Calu3 (cell line): ENCODE measurements at regions of chr3 and their contacts with region 1.

Region 1: DNA sequence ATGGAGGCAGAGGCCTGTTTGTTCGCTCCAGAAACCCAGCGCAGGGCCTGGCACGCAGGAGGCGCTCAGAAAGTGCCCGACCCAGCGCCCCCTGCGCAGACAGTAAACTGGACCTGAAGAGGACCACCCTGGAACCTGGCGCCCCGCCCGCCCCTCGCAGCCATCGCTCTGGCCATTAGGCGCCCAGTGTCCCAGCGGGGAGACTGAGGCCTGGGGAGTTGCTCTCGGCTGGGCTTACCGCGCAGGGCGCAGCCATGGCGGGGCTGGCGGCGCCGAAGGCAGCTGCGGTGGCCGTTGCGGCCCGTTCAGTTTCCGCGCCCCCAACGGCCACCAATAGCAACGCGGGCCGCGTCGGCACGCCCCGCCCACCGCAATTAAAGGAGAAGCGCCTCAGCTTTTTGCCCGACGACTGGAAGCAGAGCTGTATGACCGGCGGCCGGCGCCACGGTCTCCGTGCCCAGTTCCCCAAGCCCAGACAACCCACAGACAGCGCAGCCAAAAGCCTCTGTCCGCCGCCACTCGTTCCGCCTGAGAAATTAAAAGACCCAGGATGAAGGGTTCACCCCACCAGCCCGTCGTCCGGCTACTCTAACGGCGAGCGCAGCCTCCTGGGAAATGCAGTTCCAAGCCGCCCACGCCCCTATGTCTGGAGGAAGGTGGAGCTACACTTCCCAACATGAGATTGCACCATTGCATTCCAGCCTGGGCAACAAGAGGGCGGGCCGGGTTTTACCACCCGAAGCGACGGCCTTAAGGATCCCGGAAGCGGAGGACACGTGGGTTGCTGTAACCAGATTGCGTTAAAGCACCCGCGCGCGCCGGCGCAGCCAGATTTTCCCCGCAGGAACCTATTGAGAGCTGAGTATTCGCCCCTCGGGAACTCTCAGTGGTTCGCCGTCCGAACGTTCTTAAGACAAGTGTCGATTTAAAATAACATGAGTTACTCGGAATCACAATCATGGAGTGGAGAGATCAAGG is at the start of gene POC1A:
- DNase-seq: peak; percentile 92
- H3K4me3 Mint-ChIP-seq: peak within 1 kb of the TSS; percentile 93
- H3K27ac Mint-ChIP-seq: peak within 1 kb of the TSS; percentile 96
- H3K4me1 Mint-ChIP-seq: peaks cover 8% of the 10 kb centered on the region
- H3K27me3 Mint-ChIP-seq: no peaks in the 10 kb centered on the region
- CTCF ChIP-seq: no peak
- total RNA-seq, gene POC1A: 26.4 and 26.9 TPM in 2 replicates

Region 2: DNA sequence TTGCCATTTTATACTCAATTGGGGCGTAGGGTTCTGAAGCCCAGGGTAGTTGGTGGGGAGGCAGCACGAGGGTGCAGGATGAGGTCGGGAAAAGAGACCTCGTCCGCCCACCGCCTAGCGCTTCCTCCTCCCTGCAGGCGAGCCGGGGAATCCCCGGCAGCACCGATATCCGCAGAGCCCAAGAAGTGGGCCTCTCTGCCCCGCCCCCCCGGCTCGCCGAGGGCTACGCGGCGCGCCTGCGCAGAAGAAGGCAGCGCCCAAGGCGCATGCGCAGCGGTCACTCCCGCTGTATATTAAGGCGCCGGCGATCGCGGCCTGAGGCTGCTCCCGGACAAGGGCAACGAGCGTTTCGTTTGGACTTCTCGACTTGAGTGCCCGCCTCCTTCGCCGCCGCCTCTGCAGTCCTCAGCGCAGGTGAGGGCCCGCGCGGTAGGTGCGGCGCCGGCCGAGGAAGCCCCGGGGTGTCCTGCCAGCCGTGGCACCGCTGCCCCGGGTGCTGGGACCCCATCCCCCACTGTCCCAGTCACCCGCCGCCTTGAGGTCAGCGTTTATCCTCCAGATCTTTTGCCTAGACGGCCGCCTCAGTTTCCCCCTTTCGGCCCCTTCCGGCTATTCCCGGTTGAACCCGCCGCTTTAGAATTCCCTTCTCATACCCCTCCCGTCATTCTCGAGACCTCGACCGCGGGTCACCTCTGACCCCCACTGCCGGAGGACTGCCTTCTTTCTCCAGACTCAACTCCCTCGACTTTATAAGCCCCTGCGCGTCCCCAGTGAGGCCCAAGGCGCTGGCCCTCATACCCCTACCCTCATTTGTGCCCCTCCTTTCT is 43.6 kb after region 1 on chr3 and contains the start of gene ALAS1:
- CTCF ChIA-PET with region 1: interaction called, 8 read pairs
- intact Hi-C with region 1: loop called (anchors 5 kb)
- DNase-seq: peak; percentile 95
- H3K4me3 Mint-ChIP-seq: peak within 1 kb of the TSS; percentile 96
- H3K27ac Mint-ChIP-seq: peak within 1 kb of the TSS; percentile 97
- H3K4me1 Mint-ChIP-seq: peaks cover 33% of the 10 kb centered on the region
- H3K27me3 Mint-ChIP-seq: no peaks in the 10 kb centered on the region
- CTCF ChIP-seq: no peak
- total RNA-seq, gene ALAS1: 80.2 and 81.7 TPM in 2 replicates

Region 3: GRCh38 chr3:52220380-52221026 is 66.1 kb after region 1 on chr3:
- CTCF ChIA-PET with region 1: interaction called, 13 read pairs
- intact Hi-C with region 1: loop called (anchors 5 kb)
- DNase-seq: peak; percentile 88
- H3K4me3 Mint-ChIP-seq: no peak overlapping the region
- H3K27ac Mint-ChIP-seq: no peak overlapping the region
- H3K4me1 Mint-ChIP-seq: peaks cover 27% of the 10 kb centered on the region
- H3K27me3 Mint-ChIP-seq: no peaks in the 10 kb centered on the region
- CTCF ChIP-seq: peak; percentile 86

Region 4: GRCh38 chr3:52471371-52472238 is 317.2 kb after region 1 on chr3:
- CTCF ChIA-PET with region 1: no interaction called
- intact Hi-C with region 1: no loop called
- DNase-seq: peak; percentile 70
- H3K4me3 Mint-ChIP-seq: no peak overlapping the region
- H3K27ac Mint-ChIP-seq: no peak overlapping the region
- H3K4me1 Mint-ChIP-seq: no peaks in the 10 kb centered on the region
- H3K27me3 Mint-ChIP-seq: no peaks in the 10 kb centered on the region
- CTCF ChIP-seq: peak; percentile 60

Region 5: DNA sequence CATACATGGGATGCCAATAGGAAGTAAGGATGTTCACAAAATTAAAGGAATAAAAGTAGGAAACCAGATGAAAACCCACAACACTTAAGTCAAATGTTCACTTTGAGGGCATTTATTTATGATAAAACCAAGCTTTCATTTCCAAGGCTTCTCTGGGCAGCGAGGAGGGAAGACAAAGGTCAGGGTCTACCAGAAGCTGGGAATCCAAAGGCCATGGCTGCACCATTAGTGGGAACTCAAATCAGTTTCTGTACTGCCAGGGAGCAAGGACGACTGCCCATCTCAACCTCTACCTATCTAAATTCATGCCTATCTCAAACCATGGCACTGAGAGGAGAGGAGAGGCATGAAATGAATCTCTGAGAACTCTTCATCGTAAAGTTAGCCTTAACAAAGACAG is 508.7 kb after region 1 on chr3:
- CTCF ChIA-PET with region 1: no interaction called
- intact Hi-C with region 1: no loop called
- DNase-seq: no peak
- H3K4me3 Mint-ChIP-seq: no peak overlapping the region
- H3K27ac Mint-ChIP-seq: no peak overlapping the region
- H3K4me1 Mint-ChIP-seq: no peaks in the 10 kb centered on the region
- H3K27me3 Mint-ChIP-seq: no peaks in the 10 kb centered on the region
- CTCF ChIP-seq: no peak